Activated CD8-positive, alpha-beta T cell treated with anti-CD3 and anti-CD28 coated beads, Interleukin-2, amount 10 ng/mL, durations not matched to agents 7 days and 5 days (primary cell): ENCODE measurements at regions of chr18 and their contacts with region 1.

Region 1: GRCh38 chr18:22971038-22971437 is 37.9 kb downstream of the RBBP8 start:
- DNase-seq: no peak
- ATAC-seq: no peak
- H3K4me3 Mint-ChIP-seq: no peak overlapping the region
- H3K27ac Mint-ChIP-seq: no peak overlapping the region
- H3K4me1 Mint-ChIP-seq: peaks cover 4% of the 10 kb centered on the region
- H3K27me3 Mint-ChIP-seq: no peaks in the 10 kb centered on the region

Region 2: DNA sequence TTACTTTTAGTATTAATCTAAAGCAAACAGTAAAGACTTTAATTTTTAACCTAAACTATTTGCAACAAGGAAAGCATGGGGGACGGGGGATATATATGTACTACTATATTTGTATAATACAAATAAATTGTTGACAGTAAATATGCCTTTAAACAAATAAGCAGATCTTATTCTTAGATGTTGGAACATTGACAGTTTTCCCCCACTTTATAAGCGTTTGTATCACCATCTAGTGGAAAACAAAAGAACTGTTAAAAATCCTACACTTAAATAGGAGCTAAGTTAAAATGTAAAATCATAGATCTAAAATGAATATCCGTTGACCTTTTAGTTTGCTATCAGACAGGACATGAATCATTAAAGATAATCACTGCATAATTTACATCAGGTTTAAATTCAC is 12.1 kb after region 1 on chr18:
- CTCF ChIA-PET with region 1: interaction called, 13 read pairs
- POLR2A ChIA-PET with region 1: no interaction called
- DNase-seq: no peak
- ATAC-seq: no peak
- H3K4me3 Mint-ChIP-seq: no peak overlapping the region
- H3K27ac Mint-ChIP-seq: no peak overlapping the region
- H3K4me1 Mint-ChIP-seq: peaks cover 3% of the 10 kb centered on the region
- H3K27me3 Mint-ChIP-seq: no peaks in the 10 kb centered on the region